MCF 10A (cell line): ENCODE measurements at regions of chr3 and their contacts with region 1.

Region 1: DNA sequence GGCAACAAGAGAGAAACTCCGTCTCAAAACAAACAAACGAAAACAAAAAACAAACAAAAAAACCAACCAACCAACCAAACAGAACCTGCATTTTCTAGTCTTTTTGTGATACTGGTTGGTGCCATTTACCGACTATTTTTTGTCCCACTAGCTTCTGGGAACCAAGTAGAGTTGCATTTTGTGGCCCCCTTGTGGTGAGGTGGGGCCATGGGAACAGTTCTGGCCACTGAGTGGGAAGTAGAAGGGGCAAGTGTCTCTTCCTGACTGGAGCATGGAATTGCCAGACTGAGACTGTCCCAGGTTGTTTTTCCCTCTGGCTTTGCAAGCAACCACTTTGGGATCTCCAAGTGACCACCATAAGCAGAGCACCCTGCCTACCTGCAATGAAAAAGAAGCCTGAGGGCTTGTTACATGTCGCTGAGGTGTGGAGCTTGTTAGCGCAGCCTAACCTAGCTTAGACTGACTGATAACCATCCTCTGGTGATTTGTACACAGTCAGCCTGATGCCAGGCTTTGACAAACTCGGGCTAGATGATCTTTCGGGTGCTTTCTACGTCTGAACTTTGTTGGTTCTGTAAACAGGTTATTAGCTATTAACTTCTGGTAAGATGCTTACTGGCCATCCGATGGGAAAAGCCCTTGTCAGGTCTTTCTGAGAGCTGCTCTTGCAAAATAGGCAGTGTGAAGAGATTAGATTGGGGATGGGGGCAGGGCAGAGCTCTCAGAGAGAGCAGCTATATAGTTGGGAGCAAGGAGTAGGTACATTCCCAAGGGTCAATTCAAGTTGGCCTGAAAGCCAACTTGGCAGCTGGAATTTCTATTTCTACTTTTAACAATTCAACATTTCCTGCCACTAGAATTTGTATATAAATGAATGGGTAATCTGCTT is 172.2 kb downstream of the SSR3 start:
- DNase-seq: peak; percentile 65
- H3K4me3 Mint-ChIP-seq: no peak overlapping the region
- H3K27ac Mint-ChIP-seq: no peak overlapping the region
- H3K4me1 Mint-ChIP-seq: no peaks in the 10 kb centered on the region
- H3K27me3 Mint-ChIP-seq: peaks cover 73% of the 10 kb centered on the region
- CTCF ChIP-seq: peak; percentile 64

Region 2: GRCh38 chr3:155995525-155996351 is 387.0 kb before region 1 on chr3:
- CTCF ChIA-PET with region 1: no interaction called
- POLR2A ChIA-PET with region 1: no interaction called
- intact Hi-C with region 1: loop called (anchors 1 kb)
- DNase-seq: peak; percentile 59
- H3K4me3 Mint-ChIP-seq: no peak overlapping the region
- H3K27ac Mint-ChIP-seq: no peak overlapping the region
- H3K4me1 Mint-ChIP-seq: no peaks in the 10 kb centered on the region
- H3K27me3 Mint-ChIP-seq: peaks cover 7% of the 10 kb centered on the region
- CTCF ChIP-seq: peak; percentile 40

Region 3: DNA sequence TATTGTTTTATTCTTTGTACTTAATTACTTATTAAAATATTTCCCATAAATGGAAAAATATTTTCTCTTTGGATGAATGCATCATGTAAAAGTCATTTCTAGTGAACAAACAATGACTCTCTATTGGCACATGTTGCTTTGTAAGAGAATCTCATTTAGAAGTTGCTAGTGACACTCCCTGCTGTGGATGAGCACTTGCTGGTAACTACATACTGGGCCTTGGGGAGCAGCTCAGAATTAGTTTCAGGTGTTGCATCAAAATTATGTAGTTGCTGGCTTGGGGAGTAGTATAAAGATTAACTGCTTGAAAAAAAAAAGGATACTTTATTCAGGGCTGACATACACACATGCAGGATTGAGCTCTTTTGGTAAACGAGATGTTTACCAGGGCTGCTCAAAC is 342.7 kb before region 1 on chr3:
- CTCF ChIA-PET with region 1: no interaction called
- POLR2A ChIA-PET with region 1: no interaction called
- intact Hi-C with region 1: loop called (anchors 10 kb)
- DNase-seq: no peak
- H3K4me3 Mint-ChIP-seq: no peak overlapping the region
- H3K27ac Mint-ChIP-seq: no peak overlapping the region
- H3K4me1 Mint-ChIP-seq: no peaks in the 10 kb centered on the region
- H3K27me3 Mint-ChIP-seq: peaks cover 17% of the 10 kb centered on the region
- CTCF ChIP-seq: no peak

Region 4: GRCh38 chr3:156174229-156174847 is 208.4 kb before region 1 on chr3:
- CTCF ChIA-PET with region 1: interaction called, 8 read pairs
- POLR2A ChIA-PET with region 1: no interaction called
- intact Hi-C with region 1: loop called (anchors 1 kb)
- DNase-seq: peak; percentile 51
- H3K4me3 Mint-ChIP-seq: no peak overlapping the region
- H3K27ac Mint-ChIP-seq: no peak overlapping the region
- H3K4me1 Mint-ChIP-seq: no peaks in the 10 kb centered on the region
- H3K27me3 Mint-ChIP-seq: no peaks in the 10 kb centered on the region
- CTCF ChIP-seq: peak; percentile 25